Activated CD4-positive, alpha-beta memory T cell treated with anti-CD3 and anti-CD28 coated beads for 36 hours (primary cell): ENCODE measurements at regions of chr4 and their contacts with region 1.

Region 1: GRCh38 chr4:38980903-38981676 is 51.1 kb downstream of the TMEM156 start:
- DNase-seq: peak; percentile 56
- H3K4me3 Mint-ChIP-seq: peak overlapping the region; percentile 36
- H3K27ac Mint-ChIP-seq: peak overlapping the region; percentile 93
- H3K4me1 Mint-ChIP-seq: peaks cover 64% of the 10 kb centered on the region
- H3K27me3 Mint-ChIP-seq: no peaks in the 10 kb centered on the region

Region 2: DNA sequence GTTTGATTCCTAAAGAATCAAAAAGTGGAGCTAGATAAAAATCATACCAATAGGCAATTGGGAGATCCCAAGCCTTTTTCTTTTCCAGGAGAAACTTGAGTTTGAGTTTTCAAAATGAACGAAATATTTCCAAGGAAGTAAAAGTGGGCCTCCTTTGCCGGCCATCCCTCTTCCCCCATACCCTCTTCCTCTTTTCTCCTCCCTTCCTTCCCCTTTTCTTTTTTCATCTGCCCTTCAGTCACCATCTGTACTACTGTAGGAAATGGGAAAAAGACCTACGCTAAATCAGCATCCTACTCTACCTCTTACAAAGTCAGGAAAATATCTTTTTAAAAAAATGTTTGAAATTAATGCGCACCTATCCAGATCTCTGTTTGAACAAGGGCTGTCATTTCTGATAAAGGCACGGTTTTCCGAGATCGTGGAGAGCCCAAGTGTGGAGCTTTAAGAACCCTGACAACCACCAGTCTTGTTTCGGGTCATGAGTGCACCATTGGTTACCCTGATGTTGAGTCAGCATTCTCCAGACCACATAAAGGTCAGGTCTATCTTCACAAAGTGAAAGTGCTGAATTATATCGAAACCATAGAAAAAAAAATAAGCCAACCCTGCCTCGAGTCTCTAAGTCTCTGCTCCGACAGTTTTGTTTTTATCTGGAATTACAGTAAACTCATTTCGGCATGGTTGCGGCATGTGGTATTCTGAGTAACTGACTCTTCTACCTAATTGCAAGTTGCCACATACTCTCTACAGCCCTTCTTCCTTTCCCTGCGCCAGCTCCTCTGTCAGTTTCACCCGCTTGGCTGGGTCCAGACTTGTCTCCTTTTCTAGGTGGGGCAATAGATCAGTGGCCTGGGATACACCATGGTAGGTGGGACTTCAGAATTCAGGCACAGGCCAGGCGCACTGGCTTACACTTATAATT is 457.3 kb before region 1 on chr4:
- CTCF ChIA-PET with region 1: no interaction called
- POLR2A ChIA-PET with region 1: no interaction called
- intact Hi-C with region 1: loop called (anchors 1 kb)
- DNase-seq: peak; percentile 87
- H3K4me3 Mint-ChIP-seq: peak overlapping the region; percentile 54
- H3K27ac Mint-ChIP-seq: peak overlapping the region; percentile 68
- H3K4me1 Mint-ChIP-seq: peaks cover 30% of the 10 kb centered on the region
- H3K27me3 Mint-ChIP-seq: peaks cover 20% of the 10 kb centered on the region

Region 3: GRCh38 chr4:38902695-38903094 is 78.4 kb before region 1 on chr4:
- CTCF ChIA-PET with region 1: interaction called, 10 read pairs
- POLR2A ChIA-PET with region 1: no interaction called
- intact Hi-C with region 1: loop called (anchors 5 kb)
- DNase-seq: no peak
- H3K4me3 Mint-ChIP-seq: no peak overlapping the region
- H3K27ac Mint-ChIP-seq: no peak overlapping the region
- H3K4me1 Mint-ChIP-seq: peaks cover 9% of the 10 kb centered on the region
- H3K27me3 Mint-ChIP-seq: peaks cover 3% of the 10 kb centered on the region

Region 4: DNA sequence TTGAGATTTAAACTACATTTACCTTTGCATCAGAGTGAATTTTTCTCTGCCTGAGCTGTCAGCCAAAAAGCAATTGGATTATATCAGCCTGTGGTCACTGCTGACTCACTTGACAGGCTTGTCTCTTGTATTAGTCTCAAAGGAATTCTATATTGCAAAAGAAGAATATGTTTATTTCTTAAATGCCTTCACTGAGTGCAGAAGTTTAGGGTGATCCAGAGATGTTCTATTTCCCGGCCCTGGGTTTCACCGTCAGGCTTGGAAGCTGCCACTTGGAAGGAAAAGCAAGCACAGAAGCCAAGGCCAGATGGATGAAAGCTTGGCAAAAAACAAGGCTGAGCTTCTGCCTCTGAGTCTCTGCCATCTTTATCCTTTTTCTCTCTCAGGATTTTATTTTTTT is 32.5 kb before region 1 on chr4:
- CTCF ChIA-PET with region 1: interaction called, 13 read pairs
- POLR2A ChIA-PET with region 1: interaction called, 11 read pairs
- intact Hi-C with region 1: no loop called
- DNase-seq: no peak
- H3K4me3 Mint-ChIP-seq: no peak overlapping the region
- H3K27ac Mint-ChIP-seq: peak overlapping the region; percentile 82
- H3K4me1 Mint-ChIP-seq: peaks cover 52% of the 10 kb centered on the region
- H3K27me3 Mint-ChIP-seq: peaks cover under 1% of the 10 kb centered on the region

Region 5: DNA sequence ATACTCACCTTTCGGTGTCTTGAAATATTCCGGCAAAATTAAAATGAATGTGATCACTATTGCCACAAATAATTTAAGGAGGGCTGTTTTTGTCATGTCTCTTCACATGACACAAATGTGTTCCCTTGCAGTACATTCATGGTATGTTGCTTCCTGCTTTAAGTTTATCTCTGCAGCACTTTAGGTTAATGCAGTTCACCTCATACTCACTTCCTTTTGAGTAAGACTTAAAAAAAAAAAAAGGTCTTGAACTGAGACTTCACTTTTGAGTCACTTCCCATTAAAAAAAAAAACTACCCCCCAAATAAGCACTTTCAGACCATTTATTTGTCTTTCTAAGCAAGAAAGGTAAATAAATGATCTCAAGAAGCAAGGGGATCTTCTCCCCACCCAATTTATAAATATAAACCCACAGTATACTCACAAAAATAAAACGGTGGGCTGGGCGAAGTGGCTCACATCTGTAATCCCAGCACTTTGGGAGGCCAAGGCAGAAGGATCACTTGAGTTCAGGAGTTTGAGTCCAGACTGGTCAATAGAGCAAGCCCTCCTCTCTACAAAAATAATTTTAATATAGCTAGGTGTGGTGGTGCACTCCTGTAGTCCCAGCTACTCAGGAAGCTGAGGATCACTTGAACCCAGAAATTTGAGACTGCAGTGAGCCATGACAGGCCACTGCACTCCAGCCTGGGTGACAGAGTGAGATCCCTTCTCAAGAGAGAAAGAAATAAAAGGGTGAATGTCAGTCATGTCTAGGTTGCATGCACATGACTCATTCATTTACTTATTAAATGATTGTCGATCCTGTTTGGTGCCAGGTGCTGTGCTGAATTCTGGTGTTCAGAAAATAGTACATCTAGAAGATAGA is 51.4 kb after region 1 on chr4 and contains the start of gene TMEM156:
- CTCF ChIA-PET with region 1: no interaction called
- POLR2A ChIA-PET with region 1: interaction called, 6 read pairs
- intact Hi-C with region 1: loop called (anchors 1 kb)
- DNase-seq: peak; percentile 71
- H3K4me3 Mint-ChIP-seq: peak within 1 kb of the TSS; percentile 78
- H3K27ac Mint-ChIP-seq: peak within 1 kb of the TSS; percentile 87
- H3K4me1 Mint-ChIP-seq: peaks cover 47% of the 10 kb centered on the region
- H3K27me3 Mint-ChIP-seq: no peaks in the 10 kb centered on the region
- total RNA-seq, gene TMEM156: 28.0 to 28.4 TPM

Region 6: GRCh38 chr4:39134683-39135319 is 153.7 kb after region 1 on chr4:
- CTCF ChIA-PET with region 1: interaction called, 3 read pairs
- POLR2A ChIA-PET with region 1: no interaction called
- intact Hi-C with region 1: loop called (anchors 5 kb)
- DNase-seq: no peak
- H3K4me3 Mint-ChIP-seq: no peak overlapping the region
- H3K27ac Mint-ChIP-seq: no peak overlapping the region
- H3K4me1 Mint-ChIP-seq: peaks cover 7% of the 10 kb centered on the region
- H3K27me3 Mint-ChIP-seq: no peaks in the 10 kb centered on the region

Region 7: GRCh38 chr4:39657465-39657864 is 676.4 kb after region 1 on chr4:
- CTCF ChIA-PET with region 1: no interaction called
- POLR2A ChIA-PET with region 1: no interaction called
- intact Hi-C with region 1: no loop called
- DNase-seq: no peak
- H3K4me3 Mint-ChIP-seq: no peak overlapping the region
- H3K27ac Mint-ChIP-seq: no peak overlapping the region
- H3K4me1 Mint-ChIP-seq: peaks cover 5% of the 10 kb centered on the region
- H3K27me3 Mint-ChIP-seq: no peaks in the 10 kb centered on the region